Endothelial cell of umbilical vein (primary cell): ENCODE measurements at regions of chr2 and their contacts with region 1.

Region 1: DNA sequence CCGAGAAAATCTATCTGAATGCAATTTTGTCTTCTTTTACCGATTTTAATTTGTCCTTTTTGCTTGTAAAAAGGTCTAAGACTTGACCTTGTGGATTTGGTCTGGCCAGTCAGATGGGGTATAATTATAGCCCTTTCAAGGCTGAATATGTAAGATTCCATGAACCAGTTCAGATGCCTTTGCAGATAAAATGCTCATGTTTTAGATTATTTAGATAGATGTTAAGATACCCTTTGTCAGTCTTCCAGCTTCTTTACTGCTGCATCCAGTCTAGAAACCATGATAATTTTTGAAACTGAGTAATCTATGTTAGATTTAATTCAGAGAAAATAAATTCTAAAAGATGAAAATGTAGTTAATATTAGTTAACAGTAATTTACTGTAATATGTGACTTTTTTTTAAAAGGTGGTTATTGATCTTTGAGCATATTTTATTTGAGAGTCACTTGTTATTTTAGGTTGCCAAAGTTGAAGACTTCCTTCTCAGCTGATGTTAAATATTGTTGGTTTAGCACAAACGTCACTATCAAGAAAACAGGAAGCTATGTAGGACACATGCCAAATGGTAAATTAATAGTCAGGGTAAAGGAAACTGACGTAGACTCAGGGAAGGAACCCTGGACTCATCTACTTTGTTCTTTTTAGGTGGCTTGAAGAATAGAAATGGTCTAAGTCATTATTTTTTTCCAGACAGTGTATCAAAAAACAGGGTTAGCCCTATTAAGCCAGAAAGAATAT is 29.8 kb downstream of the BABAM2 start:
- DNase-seq: peak; percentile 95
- H3K4me3 ChIP-seq: peak overlapping the region in 1 of 3 experiments; percentile 14
- H3K27ac ChIP-seq: peak overlapping the region; percentile 96
- H3K4me1 ChIP-seq: peaks cover 17% of the 10 kb centered on the region
- H3K27me3 ChIP-seq: no peaks in the 10 kb centered on the region
- CTCF ChIP-seq: no peak
- POLR2A ChIP-seq: no peak

Region 2: GRCh38 chr2:27754138-27754588 is 166.2 kb before region 1 on chr2:
- CTCF ChIA-PET with region 1: no interaction called
- POLR2A ChIA-PET with region 1: no interaction called
- dilution Hi-C with region 1: no loop called
- intact Hi-C with region 1: loop called (anchors 1 kb)
- DNase-seq: peak; percentile 81
- H3K4me3 ChIP-seq: no peak overlapping the region
- H3K27ac ChIP-seq: no peak overlapping the region
- H3K4me1 ChIP-seq: no peaks in the 10 kb centered on the region
- H3K27me3 ChIP-seq: no peaks in the 10 kb centered on the region
- CTCF ChIP-seq: peak; percentile 94 to 97
- POLR2A ChIP-seq: no peak

Region 3: GRCh38 chr2:27798948-27799645 is 121.2 kb before region 1 on chr2:
- CTCF ChIA-PET with region 1: no interaction called
- POLR2A ChIA-PET with region 1: interaction called, 4 read pairs
- dilution Hi-C with region 1: no loop called
- intact Hi-C with region 1: loop called (anchors 1 kb)
- DNase-seq: peak; percentile 93
- H3K4me3 ChIP-seq: no peak overlapping the region
- H3K27ac ChIP-seq: peak overlapping the region; percentile 94
- H3K4me1 ChIP-seq: peaks cover 34% of the 10 kb centered on the region
- H3K27me3 ChIP-seq: no peaks in the 10 kb centered on the region
- CTCF ChIP-seq: no peak
- POLR2A ChIP-seq: no peak

Region 4: GRCh38 chr2:27942612-27943547 is 22.6 kb after region 1 on chr2:
- CTCF ChIA-PET with region 1: no interaction called
- POLR2A ChIA-PET with region 1: interaction called, 3 read pairs
- dilution Hi-C with region 1: no loop called
- intact Hi-C with region 1: loop called (anchors 1 kb)
- DNase-seq: no peak
- H3K4me3 ChIP-seq: no peak overlapping the region
- H3K27ac ChIP-seq: no peak overlapping the region
- H3K4me1 ChIP-seq: peaks cover 18% of the 10 kb centered on the region
- H3K27me3 ChIP-seq: no peaks in the 10 kb centered on the region
- CTCF ChIP-seq: no peak
- POLR2A ChIP-seq: no peak

Region 5: GRCh38 chr2:28276076-28276618 is 355.8 kb after region 1 on chr2:
- CTCF ChIA-PET with region 1: interaction called, 3 read pairs
- POLR2A ChIA-PET with region 1: no interaction called
- dilution Hi-C with region 1: no loop called
- intact Hi-C with region 1: loop called (anchors 1 kb)
- DNase-seq: peak; percentile 96
- H3K4me3 ChIP-seq: no peak overlapping the region
- H3K27ac ChIP-seq: peak overlapping the region; percentile 98
- H3K4me1 ChIP-seq: peaks cover 29% of the 10 kb centered on the region
- H3K27me3 ChIP-seq: no peaks in the 10 kb centered on the region
- CTCF ChIP-seq: no peak
- POLR2A ChIP-seq: no peak